Heart right ventricle (tissue), 16 donors: ENCODE measurements at regions of chr6 and their contacts with region 1.

Region 1: GRCh38 chr6:15254070-15254841 is 8.4 kb downstream of the JARID2 start:
- DNase-seq: no peak
- ATAC-seq: no peak
- H3K4me3 ChIP-seq: no peak overlapping the region
- H3K27ac ChIP-seq: peak overlapping the region in 1 of 10 donors; percentile 22
- H3K4me1 ChIP-seq: peaks cover 6 to 98% (median 72%) of the 10 kb centered on the region in 9 donors
- H3K27me3 ChIP-seq: no peaks in the 10 kb centered on the region
- CTCF ChIP-seq: peak in 3 of 9 donors; percentile 21 to 26 (median 24)

Region 2: GRCh38 chr6:14431385-14432330 is 822.6 kb before region 1 on chr6:
- intact Hi-C with region 1: loop called in 2 of 10 experiments (anchors 10 kb)
- DNase-seq: peak in 1 of 2 donors; percentile 44
- ATAC-seq: peak; percentile 83 to 95 (median 94)
- H3K4me3 ChIP-seq: peak overlapping the region in 9 of 10 donors; percentile 16 to 52 (median 40)
- H3K27ac ChIP-seq: peak overlapping the region in 9 of 10 donors; percentile 48 to 77 (median 62)
- H3K4me1 ChIP-seq: peaks cover 0 to 38% (median 0%) of the 10 kb centered on the region in 9 donors
- H3K27me3 ChIP-seq: no peaks in the 10 kb centered on the region
- CTCF ChIP-seq: no peak

Region 3: GRCh38 chr6:15096894-15097837 is 157.1 kb before region 1 on chr6:
- intact Hi-C with region 1: no loop called
- DNase-seq: no peak
- ATAC-seq: no peak
- H3K4me3 ChIP-seq: no peak overlapping the region
- H3K27ac ChIP-seq: no peak overlapping the region
- H3K4me1 ChIP-seq: peaks cover 0 to 3% (median 0%) of the 10 kb centered on the region in 9 donors
- H3K27me3 ChIP-seq: no peaks in the 10 kb centered on the region
- CTCF ChIP-seq: no peak

Region 4: DNA sequence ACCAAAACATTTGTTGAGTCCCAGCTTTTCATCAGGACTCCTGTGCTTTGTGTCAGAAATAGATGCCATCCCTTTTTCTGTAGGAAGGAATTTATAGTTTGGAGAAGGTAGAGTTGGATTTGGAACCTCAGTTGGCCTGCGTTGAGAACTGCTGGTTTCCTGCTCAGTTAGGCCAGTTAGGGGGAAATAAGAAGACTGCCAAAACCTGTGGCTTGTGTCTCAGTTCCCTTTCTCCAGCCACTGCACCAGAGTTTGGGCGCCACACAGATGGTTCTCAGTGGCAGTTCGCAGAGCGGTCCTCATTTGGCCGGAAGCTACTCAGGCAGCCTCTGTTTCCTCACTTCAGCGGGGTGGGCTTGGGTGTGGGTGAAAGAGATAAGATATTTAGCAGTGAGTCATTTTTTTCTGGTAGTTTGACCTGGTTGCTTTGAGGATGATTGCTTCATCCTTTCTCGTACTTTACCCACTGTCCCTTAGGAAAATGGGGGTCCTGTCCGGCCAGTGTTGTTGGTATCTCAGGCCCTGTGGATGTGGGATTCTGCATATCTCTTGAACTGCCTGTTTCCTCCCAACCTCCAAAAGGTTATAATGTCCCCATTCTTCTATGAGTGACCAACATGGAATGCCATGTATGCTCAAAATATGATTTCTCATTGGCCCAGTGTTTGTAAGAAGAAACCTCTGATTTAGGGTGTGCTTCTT is 45.3 kb after region 1 on chr6:
- intact Hi-C with region 1: loop called in 1 of 10 experiments (anchors 5 kb)
- DNase-seq: peak; percentile 31 to 34
- ATAC-seq: peak; percentile 27 to 68 (median 56)
- H3K4me3 ChIP-seq: no peak overlapping the region
- H3K27ac ChIP-seq: peak overlapping the region in 3 of 10 donors; percentile 1 to 65 (median 28)
- H3K4me1 ChIP-seq: peaks cover 6 to 75% (median 64%) of the 10 kb centered on the region in 9 donors
- H3K27me3 ChIP-seq: no peaks in the 10 kb centered on the region
- CTCF ChIP-seq: no peak

Region 5: GRCh38 chr6:15310680-15311079 is 56.4 kb after region 1 on chr6:
- intact Hi-C with region 1: no loop called
- DNase-seq: no peak
- ATAC-seq: no peak
- H3K4me3 ChIP-seq: no peak overlapping the region
- H3K27ac ChIP-seq: peak overlapping the region in 1 of 10 donors; percentile 17
- H3K4me1 ChIP-seq: peaks cover 9 to 81% (median 73%) of the 10 kb centered on the region in 9 donors
- H3K27me3 ChIP-seq: no peaks in the 10 kb centered on the region
- CTCF ChIP-seq: no peak

Region 6: GRCh38 chr6:15365273-15365687 is 111.0 kb after region 1 on chr6:
- intact Hi-C with region 1: loop called in 3 of 10 experiments (anchors 5 to 10 kb)
- DNase-seq: peak; percentile 76 to 89
- ATAC-seq: peak; percentile 78 to 94 (median 90)
- H3K4me3 ChIP-seq: peak overlapping the region in 5 of 10 donors; percentile 1 to 25 (median 4)
- H3K27ac ChIP-seq: no peak overlapping the region
- H3K4me1 ChIP-seq: peaks cover 0 to 78% (median 62%) of the 10 kb centered on the region in 9 donors
- H3K27me3 ChIP-seq: no peaks in the 10 kb centered on the region
- CTCF ChIP-seq: no peak

Region 7: GRCh38 chr6:15389765-15390723 is 135.8 kb after region 1 on chr6:
- intact Hi-C with region 1: loop called in 3 of 10 experiments (anchors 5 kb)
- DNase-seq: peak in 1 of 2 donors; percentile 32
- ATAC-seq: peak; percentile 39 to 72 (median 64)
- H3K4me3 ChIP-seq: peak overlapping the region in 1 of 10 donors; percentile 6
- H3K27ac ChIP-seq: peak overlapping the region in 6 of 10 donors; percentile 20 to 63 (median 50)
- H3K4me1 ChIP-seq: peaks cover 19 to 65% (median 52%) of the 10 kb centered on the region in 9 donors
- H3K27me3 ChIP-seq: no peaks in the 10 kb centered on the region
- CTCF ChIP-seq: peak; percentile 36 to 75 (median 61)

Region 8: GRCh38 chr6:15441215-15441868 is 187.1 kb after region 1 on chr6:
- intact Hi-C with region 1: loop called in 6 of 10 experiments (anchors 5 to 10 kb)
- DNase-seq: peak in 1 of 2 donors; percentile 56
- ATAC-seq: peak; percentile 51 to 75 (median 70)
- H3K4me3 ChIP-seq: no peak overlapping the region
- H3K27ac ChIP-seq: no peak overlapping the region
- H3K4me1 ChIP-seq: peaks cover 4 to 90% (median 70%) of the 10 kb centered on the region in 9 donors
- H3K27me3 ChIP-seq: no peaks in the 10 kb centered on the region
- CTCF ChIP-seq: peak; percentile 69 to 88 (median 80)

Region 9: DNA sequence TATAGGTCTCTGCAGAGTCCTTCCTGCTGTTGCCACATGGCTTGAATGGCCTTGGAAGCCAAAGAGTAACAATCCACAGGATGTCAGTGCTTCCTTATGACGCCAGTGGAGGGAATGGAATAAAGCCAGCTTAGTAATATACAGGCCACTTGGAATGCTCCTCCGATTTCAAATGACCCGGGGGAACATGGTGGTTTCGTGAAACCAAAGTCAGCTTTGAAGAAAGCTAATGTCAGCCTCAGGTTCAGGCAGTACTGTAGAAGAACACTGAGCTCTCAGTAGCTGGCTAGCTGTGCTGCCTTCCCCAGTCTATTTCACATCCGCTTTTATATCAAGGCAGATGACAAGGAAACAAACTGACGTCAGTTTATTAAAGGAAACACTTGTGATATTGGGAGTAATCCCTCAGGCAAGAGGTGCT is 219.5 kb after region 1 on chr6:
- intact Hi-C with region 1: loop called in 1 of 10 experiments (anchors 10 kb)
- DNase-seq: peak in 1 of 2 donors; percentile 60
- ATAC-seq: peak; percentile 65 to 92 (median 78)
- H3K4me3 ChIP-seq: no peak overlapping the region
- H3K27ac ChIP-seq: peak overlapping the region; percentile 24 to 80 (median 72)
- H3K4me1 ChIP-seq: peaks cover 17 to 80% (median 57%) of the 10 kb centered on the region in 9 donors
- H3K27me3 ChIP-seq: no peaks in the 10 kb centered on the region
- CTCF ChIP-seq: no peak